SK-N-SH (cell line): ENCODE measurements at regions of chr2 and their contacts with region 1.

Region 1: DNA sequence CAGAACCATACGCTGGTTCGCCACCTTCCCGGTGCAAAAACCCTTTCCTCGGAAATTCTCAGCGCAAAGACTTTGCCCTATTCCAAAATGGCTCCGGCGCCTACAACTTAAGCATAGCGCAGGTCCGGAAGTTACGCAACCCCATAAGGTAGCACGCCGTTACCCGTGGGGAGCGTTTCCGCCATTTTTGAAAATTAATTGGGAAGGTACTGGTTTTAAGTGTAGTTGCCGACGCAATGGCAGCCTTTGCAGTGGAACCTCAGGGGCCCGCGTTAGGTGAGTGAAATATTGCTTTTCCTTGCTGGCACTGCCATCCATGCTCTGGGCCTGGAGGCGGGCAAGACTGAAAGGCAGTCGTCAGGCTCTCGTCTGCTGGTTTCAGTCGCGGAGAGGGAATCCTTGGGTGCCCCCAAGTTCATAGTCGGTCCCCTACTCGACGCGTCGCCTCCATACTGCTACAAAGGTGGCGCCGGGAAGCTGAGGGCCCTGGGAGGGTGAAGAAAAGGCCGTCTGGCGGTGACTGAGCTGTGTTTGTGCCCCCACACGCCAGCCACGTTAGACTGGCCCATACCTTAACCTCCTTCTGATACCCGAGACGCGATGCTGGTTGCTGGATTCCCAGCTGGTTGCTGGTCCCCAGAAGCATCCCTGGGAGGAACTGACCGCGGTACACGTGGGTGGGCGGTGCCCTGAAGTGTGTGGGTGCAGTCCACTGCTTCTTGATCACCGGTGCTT is at the start of gene NUP35:
- DNase-seq: peak; percentile 78
- H3K4me3 ChIP-seq: peak within 1 kb of the TSS; percentile 81 to 85
- H3K27ac ChIP-seq: peak within 1 kb of the TSS; percentile 87 to 98
- H3K4me1 ChIP-seq: peaks cover 4 to 8% of the 10 kb centered on the region in 2 experiments; a peak in 3 of 4 replicates
- H3K27me3 ChIP-seq: no peaks in the 10 kb centered on the region
- CTCF ChIP-seq: no peak
- EP300 ChIP-seq: no peak
- RAD21 ChIP-seq: no peak
- polyA plus RNA-seq, gene NUP35: 9.1 and 11.8 TPM in 2 replicates

Region 2: GRCh38 chr2:183078465-183079138 is 45.8 kb before region 1 on chr2 and contains the start of gene DUSP19:
- CTCF ChIA-PET with region 1: no interaction called
- POLR2A ChIA-PET with region 1: interaction called, 13 read pairs
- DNase-seq: peak; percentile 88
- H3K4me3 ChIP-seq: peak within 1 kb of the TSS; percentile 69 to 82
- H3K27ac ChIP-seq: peak within 1 kb of the TSS; percentile 52 to 85
- H3K4me1 ChIP-seq: peaks cover 0 to 2% of the 10 kb centered on the region in 2 experiments; a peak in 2 of 4 replicates
- H3K27me3 ChIP-seq: no peaks in the 10 kb centered on the region
- CTCF ChIP-seq: no peak
- EP300 ChIP-seq: no peak
- RAD21 ChIP-seq: no peak
- polyA plus RNA-seq, gene DUSP19: 0.85 and 1.4 TPM in 2 replicates